ENCODE measurements at regions of chr6 and their contacts with region 1.

Region 1: DNA sequence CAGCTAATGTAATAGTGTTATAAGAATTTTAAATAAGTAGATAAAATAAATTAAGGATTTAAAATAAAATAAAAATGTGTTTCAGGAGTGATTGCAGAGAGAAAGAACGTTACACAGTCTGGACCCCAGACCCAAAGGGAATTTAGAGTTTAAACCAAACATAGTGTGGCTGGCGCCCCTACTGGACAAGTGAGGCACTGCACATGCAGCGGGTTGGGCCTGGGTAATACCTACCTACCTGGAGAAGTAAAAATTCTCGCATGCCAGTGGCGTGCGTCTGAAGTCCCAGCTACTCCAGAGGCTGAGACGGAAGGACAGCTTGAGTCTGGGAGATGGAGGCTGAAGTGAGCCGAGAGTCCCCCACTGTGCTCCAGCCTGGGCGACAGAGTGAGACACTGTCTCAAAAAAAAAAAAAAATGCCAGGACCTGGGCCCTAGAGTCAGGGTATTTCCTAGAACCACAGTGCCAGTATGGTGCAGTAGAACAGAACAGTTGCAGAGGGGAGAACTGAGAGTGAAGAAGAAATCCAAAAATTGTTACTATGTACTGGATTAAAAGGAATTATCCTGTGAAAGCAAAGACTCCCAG is 71.4 kb upstream of the TCF21 start:
- H3K4me3 ChIP-seq: no peak overlapping the region
- H3K27ac ChIP-seq: no peak overlapping the region
- H3K4me1 ChIP-seq: no peaks in the 10 kb centered on the region
- CTCF ChIP-seq: no peak

Region 2: DNA sequence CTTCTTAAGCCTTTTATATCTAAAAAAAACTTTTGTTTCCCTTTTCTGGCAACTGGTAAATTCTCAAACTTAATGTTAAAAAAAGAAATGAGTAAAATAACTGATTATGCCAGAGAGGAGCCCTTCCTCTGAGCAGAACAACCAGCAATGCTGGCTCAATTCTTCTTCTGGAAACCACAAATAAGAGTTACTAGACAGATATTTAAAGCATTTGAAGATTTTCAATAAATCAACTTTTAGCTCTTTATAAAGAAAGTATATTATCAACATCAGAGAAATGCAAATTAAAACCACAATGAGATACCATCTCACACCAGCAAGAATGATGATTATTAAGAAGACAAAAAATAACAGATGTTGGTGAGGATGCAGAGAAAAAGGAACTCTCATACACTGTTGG is 10.2 kb after region 1 on chr6:
- CTCF ChIA-PET with region 1: interaction called, 20 read pairs
- POLR2A ChIA-PET with region 1: no interaction called
- H3K4me3 ChIP-seq: no peak overlapping the region
- H3K27ac ChIP-seq: no peak overlapping the region
- H3K4me1 ChIP-seq: no peaks in the 10 kb centered on the region
- CTCF ChIP-seq: no peak

Region 3: DNA sequence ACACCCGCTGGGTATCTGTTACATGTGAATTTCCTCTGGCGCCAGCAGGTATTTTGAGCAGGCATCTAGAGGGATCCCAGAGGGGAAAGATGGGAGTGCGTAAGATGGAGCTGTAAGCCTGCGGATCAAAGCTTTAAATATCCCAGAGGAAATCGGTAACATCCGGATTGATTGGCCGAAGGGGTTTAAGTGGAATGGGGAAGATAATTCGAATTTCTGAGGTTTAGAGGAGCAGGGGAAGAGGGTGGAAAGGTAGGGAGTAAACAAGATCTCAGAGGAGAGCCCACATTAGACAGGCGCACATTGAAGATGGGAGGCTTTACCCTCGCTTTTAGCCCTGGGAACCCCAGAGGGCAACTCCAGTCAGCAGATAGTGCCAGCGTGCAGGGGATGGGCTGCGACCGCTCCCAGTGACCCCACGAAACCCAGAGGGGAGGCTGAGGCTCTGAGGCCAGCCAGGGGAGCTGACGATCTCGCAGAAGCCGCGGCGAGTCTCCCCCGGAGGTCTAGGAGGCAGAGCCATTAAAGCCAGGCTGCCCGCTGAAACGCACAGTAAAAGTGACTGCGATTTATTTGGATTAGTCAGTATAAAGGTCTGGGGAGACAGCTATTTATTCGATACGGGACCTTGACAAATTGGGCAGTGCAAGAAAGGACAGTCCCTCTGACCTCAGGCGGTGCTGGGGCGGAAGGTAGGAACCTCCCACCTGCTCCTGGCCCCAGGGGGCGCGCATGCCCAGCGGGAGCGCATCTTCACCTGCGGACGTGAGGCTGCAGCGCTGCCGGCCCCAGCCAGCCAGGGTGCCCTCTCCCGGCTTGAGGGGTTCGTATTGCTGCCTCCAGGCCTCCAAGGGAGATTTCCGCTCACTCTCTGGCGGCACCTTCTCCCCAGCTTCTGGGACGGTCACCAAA is 37.1 kb after region 1 on chr6:
- CTCF ChIA-PET with region 1: no interaction called
- POLR2A ChIA-PET with region 1: no interaction called
- H3K4me3 ChIP-seq: peak overlapping the region; percentile 47
- H3K27ac ChIP-seq: no peak overlapping the region
- H3K4me1 ChIP-seq: no peaks in the 10 kb centered on the region
- CTCF ChIP-seq: peak; percentile 96

Region 4: DNA sequence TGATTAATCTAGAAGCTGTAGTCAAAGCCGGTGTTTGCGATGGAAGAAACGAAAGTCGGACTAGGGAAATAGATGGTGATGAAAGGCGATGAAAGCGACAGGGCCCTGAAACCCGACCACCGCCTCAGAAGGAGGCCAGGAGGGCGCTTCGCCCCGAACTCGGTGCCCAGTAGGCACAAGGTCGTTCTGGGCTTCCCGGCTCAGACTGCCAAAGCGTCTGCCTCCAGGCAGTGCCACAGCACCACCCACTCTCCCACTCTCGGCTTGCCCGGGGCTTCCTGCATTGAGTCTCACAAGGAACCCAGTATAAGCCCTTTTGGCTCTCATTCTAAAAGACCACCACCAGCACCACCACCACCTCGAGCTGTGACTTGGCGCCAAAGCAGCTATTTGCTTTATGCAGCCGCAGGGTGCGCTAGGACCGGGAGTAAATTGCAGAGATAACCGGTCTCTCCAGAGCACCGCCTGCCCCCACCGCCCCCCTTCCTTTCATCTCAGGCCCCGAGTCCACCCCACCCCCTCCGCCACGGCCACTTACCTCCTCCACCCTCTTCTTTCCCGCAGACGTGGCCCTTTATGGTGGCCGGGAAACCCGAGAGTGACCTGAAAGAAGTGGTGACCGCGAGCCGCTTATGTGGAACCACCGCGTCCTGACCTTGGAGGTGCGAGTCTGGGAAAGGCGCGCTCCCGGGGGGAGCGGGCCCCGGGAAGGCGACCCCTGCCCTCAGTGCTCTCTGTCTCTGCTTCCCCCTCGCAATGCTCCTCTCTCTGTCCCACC is 73.8 kb after region 1 on chr6:
- CTCF ChIA-PET with region 1: no interaction called
- POLR2A ChIA-PET with region 1: no interaction called
- H3K4me3 ChIP-seq: peak overlapping the region; percentile 45
- H3K27ac ChIP-seq: peak overlapping the region; percentile 68; the same call in 1 of the 2 replicates
- H3K4me1 ChIP-seq: peaks cover 30% of the 10 kb centered on the region
- CTCF ChIP-seq: no peak

Measured in HEK293 (cell line).